ENCODE measurements at regions of chr2 and their contacts with region 1.

Region 1: DNA sequence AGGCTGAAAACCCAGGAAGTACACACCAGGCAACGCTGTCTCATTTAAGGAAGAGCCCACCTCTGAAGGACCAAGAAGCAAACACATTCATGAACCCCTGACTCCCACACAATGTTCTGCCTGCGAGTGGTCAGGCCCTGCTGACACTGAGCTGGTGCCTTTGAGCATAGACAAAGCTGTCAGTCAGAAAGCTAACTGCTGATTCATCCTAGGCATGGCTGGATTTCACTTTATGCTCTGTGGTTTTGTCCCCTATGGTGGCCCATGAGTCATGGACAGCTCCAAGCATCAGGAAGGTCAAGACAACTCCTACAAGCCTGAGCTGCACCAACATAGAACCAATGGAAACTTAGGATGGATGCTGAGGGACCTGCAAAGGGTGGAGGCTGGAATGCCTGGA is 78.9 kb downstream of the UXS1 start:
- DNase-seq: peak; percentile 66 to 86
- H3K4me3 ChIP-seq: no peak overlapping the region
- H3K27ac ChIP-seq: peak overlapping the region; percentile 63
- H3K4me1 ChIP-seq: peaks cover 30% of the 10 kb centered on the region
- H3K27me3 ChIP-seq: no peaks in the 10 kb centered on the region
- CTCF ChIP-seq: no peak

Region 2: GRCh38 chr2:106068451-106068850 is 46.8 kb before region 1 on chr2:
- CTCF ChIA-PET with region 1: no interaction called
- POLR2A ChIA-PET with region 1: no interaction called
- intact Hi-C with region 1: no loop called
- DNase-seq: no peak
- H3K4me3 ChIP-seq: no peak overlapping the region
- H3K27ac ChIP-seq: no peak overlapping the region
- H3K4me1 ChIP-seq: no peaks in the 10 kb centered on the region
- H3K27me3 ChIP-seq: peaks cover 56% of the 10 kb centered on the region
- CTCF ChIP-seq: no peak

Region 3: DNA sequence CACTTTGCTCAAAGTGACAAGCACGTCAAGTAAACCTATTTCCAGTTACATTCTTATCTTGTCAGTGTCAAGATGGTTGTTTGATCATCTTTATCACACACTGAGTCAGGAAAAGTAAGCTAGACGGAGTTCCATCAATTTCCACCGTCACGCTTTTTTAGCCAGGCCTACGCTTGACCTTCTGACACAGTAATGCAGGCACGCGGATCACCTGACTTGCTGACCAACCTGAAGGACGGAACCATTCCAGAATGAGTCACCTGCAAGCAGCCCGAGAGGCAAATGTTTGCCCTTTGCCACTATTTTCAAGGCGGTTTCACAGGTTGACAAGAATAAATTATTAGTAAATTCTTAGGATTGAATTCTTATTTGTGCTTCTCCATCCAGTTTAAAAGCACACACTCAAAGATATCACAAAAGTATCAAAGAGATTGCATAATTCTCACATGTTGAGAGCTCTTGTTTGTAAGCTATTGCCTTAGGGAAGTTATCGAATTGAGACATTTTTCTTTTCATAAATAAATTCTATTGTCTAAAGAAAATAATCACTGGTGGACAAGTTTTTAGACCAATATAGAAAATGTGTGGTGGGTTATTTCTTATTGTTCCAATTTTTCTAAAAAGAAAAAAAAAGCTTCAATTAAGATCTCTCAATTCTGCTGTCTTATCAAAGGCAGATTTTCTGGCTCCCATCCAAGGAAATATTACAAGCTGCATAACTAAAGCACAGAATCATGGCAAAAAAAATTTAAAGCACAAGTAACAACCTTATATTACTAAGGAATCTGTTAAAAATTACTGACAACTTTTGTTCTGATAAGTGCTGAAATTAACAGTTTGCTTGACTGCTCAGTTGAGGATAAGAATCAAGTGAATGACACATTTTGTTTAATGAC is 46.9 kb after region 1 on chr2:
- CTCF ChIA-PET with region 1: no interaction called
- POLR2A ChIA-PET with region 1: interaction called, 5 read pairs
- intact Hi-C with region 1: loop called (anchors 1 kb)
- DNase-seq: peak; percentile 80 to 97
- H3K4me3 ChIP-seq: peak overlapping the region; percentile 42
- H3K27ac ChIP-seq: peak overlapping the region; percentile 87
- H3K4me1 ChIP-seq: peaks cover 49% of the 10 kb centered on the region
- H3K27me3 ChIP-seq: no peaks in the 10 kb centered on the region
- CTCF ChIP-seq: no peak

Measured in PC-9 (cell line).